Gastrocnemius medialis (tissue), 4 donors: ENCODE measurements at regions of chr15 and their contacts with region 1.

Region 1: DNA sequence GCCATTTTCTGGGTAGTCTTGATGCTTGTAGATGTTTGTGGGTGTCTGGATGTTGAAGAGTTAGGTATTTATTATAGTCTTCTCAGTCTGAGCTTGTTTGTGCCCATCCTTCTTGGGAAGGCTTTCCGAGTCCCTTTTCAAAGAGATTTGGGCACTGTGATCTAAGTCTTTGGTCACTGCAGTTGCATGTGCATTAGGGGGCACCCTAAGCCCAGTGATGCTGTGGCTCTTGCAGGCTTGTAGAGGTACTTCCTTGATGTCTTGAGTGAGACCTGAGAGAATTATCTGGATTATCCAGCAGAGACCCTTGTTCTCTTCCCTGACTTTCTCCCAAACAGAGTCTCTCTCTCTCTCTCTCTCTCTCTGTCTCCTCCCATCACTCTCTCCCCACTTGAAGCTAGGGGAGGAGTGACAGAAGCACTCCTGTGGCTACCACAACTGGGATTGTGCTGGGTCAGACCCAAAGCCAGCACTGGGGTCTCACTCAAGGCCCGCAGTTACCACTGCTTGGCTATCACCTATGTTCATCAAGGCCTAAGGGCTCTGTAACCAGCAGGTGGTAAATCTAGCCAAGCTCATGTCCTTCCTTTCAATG is 68.5 kb downstream of the TMCO5A start:
- DNase-seq: no peak
- ATAC-seq: no peak
- H3K4me3 ChIP-seq: no peak overlapping the region
- H3K27ac ChIP-seq: no peak overlapping the region
- H3K4me1 ChIP-seq: no peaks in the 10 kb centered on the region
- H3K27me3 ChIP-seq: no peaks in the 10 kb centered on the region
- CTCF ChIP-seq: peak in 2 of 5 experiments; percentile 11
- POLR2A ChIP-seq: no peak

Region 2: GRCh38 chr15:38414357-38414756 is 411.4 kb after region 1 on chr15:
- in situ Hi-C with region 1: loop called in 2 of 4 experiments (anchors 10 kb)
- intact Hi-C with region 1: no loop called
- DNase-seq: peak; percentile 27 to 43
- ATAC-seq: peak; percentile 60
- H3K4me3 ChIP-seq: no peak overlapping the region
- H3K27ac ChIP-seq: no peak overlapping the region
- H3K4me1 ChIP-seq: no peaks in the 10 kb centered on the region
- H3K27me3 ChIP-seq: no peaks in the 10 kb centered on the region
- CTCF ChIP-seq: peak in 4 of 5 experiments; percentile 19 to 51 (median 30)
- POLR2A ChIP-seq: no peak

Region 3: GRCh38 chr15:38508647-38509046 is 505.7 kb after region 1 on chr15:
- in situ Hi-C with region 1: no loop called
- intact Hi-C with region 1: no loop called
- DNase-seq: no peak
- ATAC-seq: no peak
- H3K4me3 ChIP-seq: no peak overlapping the region
- H3K27ac ChIP-seq: no peak overlapping the region
- H3K4me1 ChIP-seq: no peaks in the 10 kb centered on the region
- H3K27me3 ChIP-seq: no peaks in the 10 kb centered on the region
- CTCF ChIP-seq: no peak
- POLR2A ChIP-seq: no peak